Caco-2 (cell line): ENCODE measurements at regions of chr1 and their contacts with region 1.

Region 1: GRCh38 chr1:93021539-93022134 is 57.4 kb upstream of the MTF2 start:
- DNase-seq: no peak
- H3K4me3 ChIP-seq: no peak overlapping the region
- H3K4me3 Mint-ChIP-seq: no peak overlapping the region
- H3K27ac Mint-ChIP-seq: no peak overlapping the region
- H3K4me1 ChIP-seq: no peaks in the 10 kb centered on the region
- H3K4me1 Mint-ChIP-seq: peaks cover 4% of the 10 kb centered on the region
- H3K27me3 ChIP-seq: no peaks in the 10 kb centered on the region
- H3K27me3 Mint-ChIP-seq: no peaks in the 10 kb centered on the region
- CTCF ChIP-seq: peak; percentile 45 to 66

Region 2: DNA sequence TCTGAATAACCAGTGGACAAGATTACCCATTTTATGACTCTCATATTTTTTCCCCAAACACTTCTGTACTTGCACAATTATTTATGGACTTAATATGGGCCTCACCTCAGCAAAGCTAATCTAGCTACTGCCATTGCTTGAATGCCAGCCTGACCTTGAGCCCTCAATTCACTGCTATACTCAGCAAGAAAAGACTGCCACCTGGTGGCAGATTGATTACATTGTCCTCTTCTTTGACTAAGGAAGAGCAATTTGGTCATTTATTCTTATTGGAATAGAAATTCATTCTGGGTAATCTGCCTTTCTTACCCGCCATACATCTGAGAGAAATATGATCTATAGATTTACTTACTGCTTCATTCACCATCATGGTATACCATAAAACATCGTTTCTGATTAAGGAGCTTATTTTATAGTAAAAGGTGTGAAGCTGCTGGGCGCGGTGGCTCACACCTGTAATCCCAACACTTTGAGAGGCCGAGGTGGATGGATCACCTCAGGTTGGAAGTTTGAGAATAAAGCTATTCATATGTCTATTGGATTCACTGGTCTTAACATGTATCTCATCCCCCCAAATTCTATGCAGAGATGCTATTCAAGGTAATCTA is 27.4 kb before region 1 on chr1:
- CTCF ChIA-PET with region 1: no interaction called
- POLR2A ChIA-PET with region 1: no interaction called
- intact Hi-C with region 1: no loop called
- DNase-seq: peak; percentile 59 to 64
- H3K4me3 ChIP-seq: no peak overlapping the region
- H3K4me3 Mint-ChIP-seq: no peak overlapping the region
- H3K27ac Mint-ChIP-seq: no peak overlapping the region
- H3K4me1 ChIP-seq: 0 out of 2 replicates have a peak, but pooled peaks cover 3% of the 10 kb centered on the region
- H3K4me1 Mint-ChIP-seq: no peaks in the 10 kb centered on the region
- H3K27me3 ChIP-seq: no peaks in the 10 kb centered on the region
- H3K27me3 Mint-ChIP-seq: no peaks in the 10 kb centered on the region
- CTCF ChIP-seq: peak; percentile 40 to 51

Region 3: GRCh38 chr1:93007941-93008577 is 13.6 kb before region 1 on chr1:
- CTCF ChIA-PET with region 1: no interaction called
- POLR2A ChIA-PET with region 1: no interaction called
- intact Hi-C with region 1: no loop called
- DNase-seq: no peak
- H3K4me3 ChIP-seq: no peak overlapping the region
- H3K4me3 Mint-ChIP-seq: no peak overlapping the region
- H3K27ac Mint-ChIP-seq: no peak overlapping the region
- H3K4me1 ChIP-seq: no peaks in the 10 kb centered on the region
- H3K4me1 Mint-ChIP-seq: no peaks in the 10 kb centered on the region
- H3K27me3 ChIP-seq: no peaks in the 10 kb centered on the region
- H3K27me3 Mint-ChIP-seq: no peaks in the 10 kb centered on the region
- CTCF ChIP-seq: no peak

Region 4: GRCh38 chr1:93061895-93062792 is 40.5 kb after region 1 on chr1:
- CTCF ChIA-PET with region 1: interaction called, 7 read pairs
- POLR2A ChIA-PET with region 1: no interaction called
- intact Hi-C with region 1: loop called (anchors 1 kb)
- DNase-seq: peak; percentile 30 to 40
- H3K4me3 ChIP-seq: no peak overlapping the region
- H3K4me3 Mint-ChIP-seq: no peak overlapping the region
- H3K27ac Mint-ChIP-seq: no peak overlapping the region
- H3K4me1 ChIP-seq: no peaks in the 10 kb centered on the region
- H3K4me1 Mint-ChIP-seq: no peaks in the 10 kb centered on the region
- H3K27me3 ChIP-seq: no peaks in the 10 kb centered on the region
- H3K27me3 Mint-ChIP-seq: no peaks in the 10 kb centered on the region
- CTCF ChIP-seq: peak; percentile 24 to 59

Region 5: GRCh38 chr1:93171549-93172034 is 150.0 kb after region 1 on chr1:
- CTCF ChIA-PET with region 1: no interaction called
- POLR2A ChIA-PET with region 1: no interaction called
- intact Hi-C with region 1: no loop called
- DNase-seq: no peak
- H3K4me3 ChIP-seq: no peak overlapping the region
- H3K4me3 Mint-ChIP-seq: no peak overlapping the region
- H3K27ac Mint-ChIP-seq: no peak overlapping the region
- H3K4me1 ChIP-seq: peaks cover 21% of the 10 kb centered on the region
- H3K4me1 Mint-ChIP-seq: no peaks in the 10 kb centered on the region
- H3K27me3 ChIP-seq: no peaks in the 10 kb centered on the region
- H3K27me3 Mint-ChIP-seq: no peaks in the 10 kb centered on the region
- CTCF ChIP-seq: no peak